WTC11 (cell line): ENCODE measurements at regions of chr4 and their contacts with region 1.

Region 1: GRCh38 chr4:138870737-138871554 is 144.6 kb upstream of the NOCT start:
- DNase-seq: peak; percentile 73
- ATAC-seq: peak; percentile 78
- H3K4me3 Mint-ChIP-seq: no peak overlapping the region
- H3K27ac Mint-ChIP-seq: peak overlapping the region; percentile 24; the same call in 1 of the 2 replicates
- H3K4me1 Mint-ChIP-seq: peaks cover 21% of the 10 kb centered on the region
- H3K27me3 Mint-ChIP-seq: no peaks in the 10 kb centered on the region
- CTCF ChIP-seq: peak; percentile 80

Region 2: GRCh38 chr4:138494931-138495330 is 376.0 kb before region 1 on chr4:
- CTCF ChIA-PET with region 1: interaction called, 15 read pairs
- POLR2A ChIA-PET with region 1: no interaction called
- DNase-seq: peak; percentile 51
- ATAC-seq: peak; percentile 100
- H3K4me3 Mint-ChIP-seq: no peak overlapping the region
- H3K27ac Mint-ChIP-seq: no peak overlapping the region
- H3K4me1 Mint-ChIP-seq: peaks cover 18% of the 10 kb centered on the region
- H3K27me3 Mint-ChIP-seq: no peaks in the 10 kb centered on the region; the same call in 1 of the 2 replicates
- CTCF ChIP-seq: no peak

Region 3: GRCh38 chr4:138555584-138555983 is 315.4 kb before region 1 on chr4:
- CTCF ChIA-PET with region 1: interaction called, 13 read pairs
- POLR2A ChIA-PET with region 1: no interaction called
- DNase-seq: peak; percentile 32
- ATAC-seq: peak; percentile 81
- H3K4me3 Mint-ChIP-seq: no peak overlapping the region
- H3K27ac Mint-ChIP-seq: no peak overlapping the region
- H3K4me1 Mint-ChIP-seq: peaks cover 11% of the 10 kb centered on the region
- H3K27me3 Mint-ChIP-seq: no peaks in the 10 kb centered on the region
- CTCF ChIP-seq: peak; percentile 33; the same call in 1 of the 2 replicates

Region 4: DNA sequence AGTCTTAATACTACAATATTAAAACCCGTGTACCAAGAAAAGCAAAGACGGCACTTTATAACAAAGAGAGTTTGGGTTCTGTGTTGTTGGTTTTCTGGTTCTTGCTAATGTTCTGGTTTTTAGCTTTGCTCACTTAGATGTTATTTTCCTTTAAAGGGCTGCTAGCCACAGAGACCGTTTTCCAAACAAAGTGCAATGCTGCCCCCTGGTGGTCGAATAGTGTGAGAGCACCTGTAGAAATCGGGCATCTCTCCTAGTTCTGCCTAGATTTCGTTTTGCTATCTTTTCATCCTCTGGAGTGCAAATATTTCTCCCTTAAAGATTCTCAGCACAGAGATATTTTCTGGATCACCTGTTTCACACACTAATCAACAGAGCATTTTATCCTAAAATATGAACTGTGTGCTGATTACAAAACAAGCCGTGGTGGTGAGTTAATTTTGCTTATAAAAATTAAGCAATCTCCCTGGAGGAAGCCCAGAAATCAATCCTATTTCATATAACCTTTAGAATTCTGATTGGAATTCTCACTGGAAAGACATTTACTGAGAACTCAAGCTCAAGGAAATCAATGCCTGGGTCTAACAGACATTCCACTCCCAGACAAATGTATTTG is 189.8 kb before region 1 on chr4:
- CTCF ChIA-PET with region 1: interaction called, 50 read pairs
- POLR2A ChIA-PET with region 1: no interaction called
- DNase-seq: peak; percentile 78
- ATAC-seq: peak; percentile 43
- H3K4me3 Mint-ChIP-seq: no peak overlapping the region
- H3K27ac Mint-ChIP-seq: no peak overlapping the region
- H3K4me1 Mint-ChIP-seq: peaks cover 49% of the 10 kb centered on the region
- H3K27me3 Mint-ChIP-seq: peaks cover 3% of the 10 kb centered on the region; the same call in 1 of the 2 replicates
- CTCF ChIP-seq: peak; percentile 96

Region 5: GRCh38 chr4:138851391-138852335 is 19.3 kb before region 1 on chr4:
- CTCF ChIA-PET with region 1: interaction called, 11 read pairs
- POLR2A ChIA-PET with region 1: no interaction called
- DNase-seq: no peak
- ATAC-seq: peak; percentile 95
- H3K4me3 Mint-ChIP-seq: peak overlapping the region; percentile 57
- H3K27ac Mint-ChIP-seq: no peak overlapping the region
- H3K4me1 Mint-ChIP-seq: peaks cover 17% of the 10 kb centered on the region
- H3K27me3 Mint-ChIP-seq: peaks cover 3% of the 10 kb centered on the region
- CTCF ChIP-seq: no peak

Region 6: GRCh38 chr4:138938366-138938690 is 67.4 kb after region 1 on chr4:
- CTCF ChIA-PET with region 1: interaction called, 49 read pairs
- POLR2A ChIA-PET with region 1: no interaction called
- DNase-seq: no peak
- ATAC-seq: peak; percentile 67
- H3K4me3 Mint-ChIP-seq: no peak overlapping the region
- H3K27ac Mint-ChIP-seq: no peak overlapping the region
- H3K4me1 Mint-ChIP-seq: peaks cover 55% of the 10 kb centered on the region
- H3K27me3 Mint-ChIP-seq: no peaks in the 10 kb centered on the region
- CTCF ChIP-seq: no peak